Panc1 (cell line): ENCODE measurements at regions of chr19 and their contacts with region 1.

Region 1: GRCh38 chr19:39110263-39110967 is 15.2 kb upstream of the PAK4 start:
- DNase-seq: peak; percentile 75
- ATAC-seq: peak; percentile 83
- H3K4me3 ChIP-seq: no peak overlapping the region
- H3K27ac ChIP-seq: peak overlapping the region; percentile 24; the same call in 1 of the 2 replicates
- H3K4me1 ChIP-seq: peaks cover 16% of the 10 kb centered on the region
- H3K27me3 ChIP-seq: no peaks in the 10 kb centered on the region
- CTCF ChIP-seq: peak; percentile 100

Region 2: DNA sequence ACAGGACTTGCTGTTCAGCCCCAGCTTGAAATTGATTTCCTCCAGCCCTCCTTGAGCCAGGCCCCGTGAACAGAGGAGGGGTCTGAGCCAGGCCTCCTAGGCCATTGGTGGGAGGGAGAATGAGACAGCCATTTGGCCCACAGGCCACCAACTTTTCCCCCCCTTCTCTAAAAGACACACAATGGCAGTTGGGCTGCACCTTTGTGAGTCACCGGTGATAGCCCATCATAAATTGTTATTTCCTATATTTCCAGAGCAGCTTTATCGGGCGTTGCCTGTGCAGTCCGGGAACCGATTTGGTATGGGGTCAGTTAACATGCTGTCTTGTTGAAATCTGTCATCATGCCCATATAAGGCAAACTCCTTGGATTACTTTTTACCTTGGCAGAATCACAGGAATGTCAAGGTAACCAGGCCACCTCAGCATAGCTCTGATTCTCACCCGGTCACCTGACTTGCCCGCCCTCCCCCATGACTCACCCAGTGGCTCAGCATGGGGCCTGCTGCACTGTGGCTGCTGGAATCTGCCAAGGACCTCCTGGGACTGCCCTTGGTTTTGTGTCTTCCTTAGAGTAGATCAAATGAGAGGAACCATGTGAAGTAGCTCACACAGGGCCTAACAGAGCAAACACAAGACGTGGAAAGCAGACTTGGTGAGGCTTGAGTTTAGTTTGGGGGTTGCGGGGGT is 426.9 kb before region 1 on chr19:
- CTCF ChIA-PET with region 1: no interaction called
- POLR2A ChIA-PET with region 1: no interaction called
- in situ Hi-C with region 1: no loop called
- intact Hi-C with region 1: no loop called
- DNase-seq: peak; percentile 100
- ATAC-seq: peak; percentile 87
- H3K4me3 ChIP-seq: peak overlapping the region in 1 of 2 experiments; percentile 10; a peak in 2 of 4 replicates
- H3K27ac ChIP-seq: peak overlapping the region; percentile 98
- H3K4me1 ChIP-seq: peaks cover 100% of the 10 kb centered on the region
- H3K27me3 ChIP-seq: no peaks in the 10 kb centered on the region
- CTCF ChIP-seq: no peak

Region 3: DNA sequence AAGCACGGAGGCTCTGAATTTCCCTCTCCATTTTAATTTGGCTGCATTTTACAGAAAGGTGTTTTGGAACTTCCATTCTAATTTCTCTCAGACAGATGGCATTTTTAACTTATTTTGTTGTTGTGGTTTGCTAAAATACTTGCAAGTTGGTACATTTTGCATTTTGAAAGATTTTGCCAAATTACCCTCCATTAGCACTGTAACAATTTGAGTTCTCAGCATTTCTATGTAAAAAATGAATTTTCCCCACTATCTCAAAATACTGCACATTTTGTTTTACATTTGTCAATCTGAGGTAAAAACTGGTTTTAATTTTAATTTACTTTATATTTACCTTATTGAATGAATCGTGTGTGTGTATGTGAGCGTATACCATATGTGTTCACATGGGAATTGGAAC is 253.6 kb before region 1 on chr19:
- CTCF ChIA-PET with region 1: no interaction called
- POLR2A ChIA-PET with region 1: no interaction called
- in situ Hi-C with region 1: no loop called
- intact Hi-C with region 1: no loop called
- DNase-seq: no peak
- ATAC-seq: no peak
- H3K4me3 ChIP-seq: no peak overlapping the region
- H3K27ac ChIP-seq: no peak overlapping the region
- H3K4me1 ChIP-seq: peaks cover 17% of the 10 kb centered on the region
- H3K27me3 ChIP-seq: no peaks in the 10 kb centered on the region
- CTCF ChIP-seq: no peak

Region 4: DNA sequence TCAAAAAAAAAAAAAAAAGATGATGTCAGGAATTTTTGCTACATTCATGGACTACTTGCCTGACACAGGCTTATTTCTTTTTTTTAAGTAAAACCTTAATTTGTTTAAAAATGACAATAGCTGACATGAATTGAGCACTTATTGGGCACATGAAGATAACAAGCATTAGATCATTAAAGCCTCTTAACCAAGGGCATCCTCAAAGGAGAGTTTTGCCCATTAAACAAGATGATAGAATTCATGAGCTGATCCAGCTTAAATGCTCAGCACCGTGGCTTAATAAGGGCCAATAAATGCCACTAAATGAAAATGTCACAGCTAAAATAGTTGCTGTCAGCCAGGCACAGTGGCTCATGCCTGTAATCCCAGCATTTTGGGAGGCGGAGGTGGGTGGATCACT is 154.2 kb before region 1 on chr19:
- CTCF ChIA-PET with region 1: no interaction called
- POLR2A ChIA-PET with region 1: interaction called, 10 read pairs
- in situ Hi-C with region 1: no loop called
- intact Hi-C with region 1: no loop called
- DNase-seq: no peak
- ATAC-seq: no peak
- H3K4me3 ChIP-seq: no peak overlapping the region
- H3K27ac ChIP-seq: no peak overlapping the region
- H3K4me1 ChIP-seq: no peaks in the 10 kb centered on the region
- H3K27me3 ChIP-seq: no peaks in the 10 kb centered on the region
- CTCF ChIP-seq: no peak

Region 5: DNA sequence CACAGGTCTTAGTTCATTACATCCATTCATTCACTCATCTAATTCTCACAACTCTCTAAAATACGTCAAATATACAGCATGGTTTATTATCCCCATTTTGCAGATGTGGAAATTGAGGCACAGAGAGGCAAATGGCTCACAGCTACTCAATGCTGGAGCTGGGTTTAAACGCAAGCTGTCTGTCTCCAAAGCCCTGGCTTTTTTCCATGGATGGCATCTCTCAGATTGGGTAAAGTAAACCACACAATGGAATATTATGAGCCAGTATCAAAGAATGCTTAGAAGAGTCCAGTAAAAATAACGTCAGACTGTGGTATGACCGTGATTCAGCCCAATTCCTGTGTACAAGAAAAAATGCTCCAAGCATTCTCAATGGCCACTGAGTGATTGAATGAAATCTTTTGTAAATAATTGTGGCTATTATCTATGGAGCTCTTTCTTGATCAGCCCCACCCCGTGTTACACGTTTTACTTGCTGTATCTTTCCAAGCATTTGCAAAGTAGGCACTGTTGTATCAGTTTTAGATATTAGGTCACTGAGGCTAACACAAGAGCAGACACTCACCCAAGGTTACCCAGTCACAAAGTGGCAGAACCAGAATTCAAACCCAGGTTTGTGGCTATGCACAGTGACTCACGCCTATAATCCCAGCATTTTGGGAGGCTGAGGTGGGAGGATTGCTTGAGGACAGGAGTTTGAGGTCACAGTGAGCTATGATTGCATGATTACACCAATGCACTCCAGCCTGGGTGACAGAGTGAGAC is 31.8 kb before region 1 on chr19:
- CTCF ChIA-PET with region 1: interaction called, 3 read pairs
- POLR2A ChIA-PET with region 1: interaction called, 10 read pairs
- in situ Hi-C with region 1: no loop called
- intact Hi-C with region 1: no loop called
- DNase-seq: peak; percentile 100
- ATAC-seq: peak; percentile 86
- H3K4me3 ChIP-seq: peak overlapping the region in 1 of 2 experiments; percentile 2; a peak in 1 of 4 replicates
- H3K27ac ChIP-seq: peak overlapping the region; percentile 75
- H3K4me1 ChIP-seq: peaks cover 73% of the 10 kb centered on the region
- H3K27me3 ChIP-seq: no peaks in the 10 kb centered on the region
- CTCF ChIP-seq: no peak

Region 6: GRCh38 chr19:39156326-39157230 is 46.2 kb after region 1 on chr19:
- CTCF ChIA-PET with region 1: no interaction called
- POLR2A ChIA-PET with region 1: no interaction called
- in situ Hi-C with region 1: no loop called
- intact Hi-C with region 1: no loop called
- DNase-seq: no peak
- ATAC-seq: no peak
- H3K4me3 ChIP-seq: no peak overlapping the region
- H3K27ac ChIP-seq: no peak overlapping the region
- H3K4me1 ChIP-seq: peaks cover 66% of the 10 kb centered on the region
- H3K27me3 ChIP-seq: no peaks in the 10 kb centered on the region
- CTCF ChIP-seq: no peak

Region 7: DNA sequence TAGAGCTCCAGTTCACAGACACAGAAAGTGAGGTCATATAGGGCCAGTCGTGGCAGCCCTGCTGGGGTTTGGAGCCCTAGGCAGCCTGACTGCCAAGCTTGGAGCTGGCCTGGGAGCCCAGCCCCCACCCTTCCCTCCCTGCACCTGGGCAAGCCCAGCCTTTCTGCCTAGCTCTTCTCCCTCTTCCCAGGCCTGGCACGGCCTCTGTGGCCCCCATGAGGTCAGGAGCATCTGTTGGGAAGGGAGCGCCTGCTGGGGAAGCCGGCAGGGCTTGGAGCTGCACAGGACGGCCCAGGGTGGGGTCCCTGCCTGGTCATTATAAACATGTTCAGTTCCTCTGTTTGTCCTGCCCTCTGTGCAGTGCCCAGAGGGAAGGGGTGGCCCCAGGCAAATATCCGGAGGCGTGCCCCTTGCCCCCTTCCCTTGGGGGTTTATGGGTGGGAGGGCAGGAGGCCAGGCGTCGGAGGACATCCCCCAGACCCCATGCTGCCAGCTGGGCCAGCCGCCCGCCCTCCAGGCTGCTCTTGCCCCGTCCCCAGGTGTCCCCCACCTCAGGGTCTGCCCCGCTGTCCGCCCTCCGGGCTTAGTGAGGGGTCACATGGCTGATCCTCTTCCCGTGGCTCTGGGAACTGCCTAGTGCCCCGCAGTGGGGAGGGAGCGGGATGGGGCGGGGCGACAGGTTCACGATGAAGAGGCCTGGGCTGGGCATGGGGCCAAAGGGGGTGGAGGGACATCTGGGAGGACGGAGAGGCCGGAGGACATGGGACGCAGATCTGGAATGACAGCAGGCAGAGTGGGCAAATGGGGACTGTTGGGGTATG is 56.4 kb after region 1 on chr19:
- CTCF ChIA-PET with region 1: interaction called, 25 read pairs
- POLR2A ChIA-PET with region 1: no interaction called
- in situ Hi-C with region 1: loop called (anchors 10 kb)
- intact Hi-C with region 1: no loop called
- DNase-seq: no peak
- ATAC-seq: peak; percentile 65
- H3K4me3 ChIP-seq: no peak overlapping the region
- H3K27ac ChIP-seq: no peak overlapping the region
- H3K4me1 ChIP-seq: peaks cover 33% of the 10 kb centered on the region
- H3K27me3 ChIP-seq: no peaks in the 10 kb centered on the region
- CTCF ChIP-seq: no peak

Region 8: DNA sequence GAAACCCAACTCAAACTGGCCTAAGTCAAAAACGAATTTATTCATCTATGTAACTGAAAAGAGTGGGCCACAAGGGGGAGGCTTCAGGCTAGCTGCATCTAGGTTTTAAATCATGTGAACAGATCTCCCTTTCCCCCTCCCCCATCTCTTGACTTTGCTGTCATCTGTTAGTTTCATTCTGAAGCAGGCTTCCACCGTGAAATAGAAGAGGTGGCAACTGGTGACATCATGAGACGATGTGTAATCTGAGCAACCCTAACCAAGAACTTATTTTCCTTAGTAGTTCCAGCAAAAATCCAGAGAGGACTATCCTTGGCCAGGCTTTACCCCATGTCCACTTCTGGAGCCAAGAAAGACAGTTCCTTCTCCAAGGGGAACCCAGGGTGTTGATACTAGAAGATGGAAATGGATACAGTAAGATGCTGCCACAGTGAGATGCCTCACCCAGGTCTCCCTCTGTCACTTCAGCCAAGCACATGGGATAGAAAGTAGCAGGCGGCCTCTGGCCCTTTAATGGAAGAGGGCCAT is 241.2 kb after region 1 on chr19:
- CTCF ChIA-PET with region 1: interaction called, 10 read pairs
- POLR2A ChIA-PET with region 1: no interaction called
- in situ Hi-C with region 1: no loop called
- intact Hi-C with region 1: no loop called
- DNase-seq: no peak
- ATAC-seq: peak; percentile 6
- H3K4me3 ChIP-seq: no peak overlapping the region
- H3K27ac ChIP-seq: no peak overlapping the region
- H3K4me1 ChIP-seq: no peaks in the 10 kb centered on the region
- H3K27me3 ChIP-seq: no peaks in the 10 kb centered on the region
- CTCF ChIP-seq: no peak